Activated T-helper 1 cell treated with anti-CD3 and anti-CD28 coated beads, Interleukin-12 subunit alpha, Interleukin-12 subunit beta, Interleukin-2, Interleukin-4 antibody, amounts not matched to agents 30 ng/mL and 10 ng/mL and 1 ng/mL, durations not matched to agents 14 hours and 24 hours and 36 hours (primary cell): ENCODE measurements at regions of chr17 and their contacts with region 1.

Region 1: GRCh38 chr17:28295677-28296578 is 23.1 kb upstream of the TMEM97 start:
- DNase-seq: no peak
- H3K4me3 Mint-ChIP-seq: no peak overlapping the region
- H3K27ac Mint-ChIP-seq: peak overlapping the region; percentile 85
- H3K4me1 Mint-ChIP-seq: peaks cover 15% of the 10 kb centered on the region
- H3K27me3 Mint-ChIP-seq: peaks cover 23% of the 10 kb centered on the region

Region 2: GRCh38 chr17:27818401-27819105 is 477.4 kb before region 1 on chr17:
- intact Hi-C with region 1: no loop called
- DNase-seq: no peak
- H3K4me3 Mint-ChIP-seq: no peak overlapping the region
- H3K27ac Mint-ChIP-seq: no peak overlapping the region
- H3K4me1 Mint-ChIP-seq: no peaks in the 10 kb centered on the region
- H3K27me3 Mint-ChIP-seq: no peaks in the 10 kb centered on the region

Region 3: GRCh38 chr17:28282596-28282995 is 13.3 kb before region 1 on chr17:
- intact Hi-C with region 1: loop called (anchors 1 kb)
- DNase-seq: no peak
- H3K4me3 Mint-ChIP-seq: no peak overlapping the region
- H3K27ac Mint-ChIP-seq: no peak overlapping the region
- H3K4me1 Mint-ChIP-seq: peaks cover 11% of the 10 kb centered on the region
- H3K27me3 Mint-ChIP-seq: peaks cover 42% of the 10 kb centered on the region